Psoas muscle (tissue), 8 donors: ENCODE measurements at regions of chr1 and their contacts with region 1.

Region 1: GRCh38 chr1:181142096-181142958 is 53.8 kb downstream of the IER5 start:
- DNase-seq: peak; percentile 86 to 95
- ATAC-seq: peak; percentile 96 to 98 (median 98)
- H3K4me3 ChIP-seq: peak overlapping the region; percentile 60
- H3K27ac ChIP-seq: peak overlapping the region; percentile 66
- H3K4me1 ChIP-seq: peaks cover 16% of the 10 kb centered on the region
- H3K27me3 ChIP-seq: no peaks in the 10 kb centered on the region
- CTCF ChIP-seq: peak; percentile 99

Region 2: DNA sequence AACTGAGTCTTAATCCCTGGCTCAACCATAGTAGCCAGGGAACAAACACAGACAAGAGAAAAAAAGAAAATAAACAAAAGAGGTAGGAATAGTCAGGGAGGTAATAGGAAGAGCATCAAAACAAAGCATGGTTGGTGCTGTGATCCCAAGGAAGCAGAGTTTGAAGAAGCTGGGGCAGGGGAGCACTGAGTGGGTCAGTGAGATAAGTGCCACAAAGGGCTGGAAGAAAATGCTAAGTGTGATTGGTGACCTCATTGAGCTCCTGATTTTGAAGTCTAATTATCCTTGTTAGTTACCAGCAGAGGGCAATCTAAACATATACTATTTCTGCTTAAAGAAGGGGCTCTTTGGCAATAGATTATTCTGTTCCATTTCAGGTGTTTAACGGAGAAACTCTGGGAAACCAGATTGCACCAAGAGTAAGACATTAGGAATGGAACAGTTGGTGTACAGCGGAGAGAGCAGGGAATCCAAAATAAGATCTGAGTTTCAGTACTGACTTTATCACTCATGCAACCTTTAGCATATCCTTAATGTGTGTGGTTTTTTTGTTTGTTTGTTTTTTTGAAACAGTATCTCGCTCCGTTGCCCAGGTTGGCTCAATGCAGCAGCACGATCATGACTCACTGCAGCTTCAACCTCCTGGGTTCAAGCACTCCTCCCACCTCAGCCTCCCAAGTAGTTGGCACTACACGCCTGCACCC is 260.4 kb before region 1 on chr1:
- intact Hi-C with region 1: loop called in 1 of 2 experiments (anchors 1 kb)
- DNase-seq: no peak
- ATAC-seq: peak; percentile 58 to 80 (median 71)
- H3K4me3 ChIP-seq: no peak overlapping the region
- H3K27ac ChIP-seq: peak overlapping the region; percentile 27
- H3K4me1 ChIP-seq: no peaks in the 10 kb centered on the region
- H3K27me3 ChIP-seq: no peaks in the 10 kb centered on the region
- CTCF ChIP-seq: peak; percentile 59

Region 3: GRCh38 chr1:181021811-181022434 is 120.4 kb before region 1 on chr1:
- intact Hi-C with region 1: loop called in 1 of 2 experiments (anchors 5 kb)
- DNase-seq: peak; percentile 68 to 70
- ATAC-seq: peak; percentile 39 to 69 (median 52)
- H3K4me3 ChIP-seq: peak overlapping the region; percentile 74
- H3K27ac ChIP-seq: peak overlapping the region; percentile 90
- H3K4me1 ChIP-seq: peaks cover 18% of the 10 kb centered on the region
- H3K27me3 ChIP-seq: no peaks in the 10 kb centered on the region
- CTCF ChIP-seq: no peak

Region 4: DNA sequence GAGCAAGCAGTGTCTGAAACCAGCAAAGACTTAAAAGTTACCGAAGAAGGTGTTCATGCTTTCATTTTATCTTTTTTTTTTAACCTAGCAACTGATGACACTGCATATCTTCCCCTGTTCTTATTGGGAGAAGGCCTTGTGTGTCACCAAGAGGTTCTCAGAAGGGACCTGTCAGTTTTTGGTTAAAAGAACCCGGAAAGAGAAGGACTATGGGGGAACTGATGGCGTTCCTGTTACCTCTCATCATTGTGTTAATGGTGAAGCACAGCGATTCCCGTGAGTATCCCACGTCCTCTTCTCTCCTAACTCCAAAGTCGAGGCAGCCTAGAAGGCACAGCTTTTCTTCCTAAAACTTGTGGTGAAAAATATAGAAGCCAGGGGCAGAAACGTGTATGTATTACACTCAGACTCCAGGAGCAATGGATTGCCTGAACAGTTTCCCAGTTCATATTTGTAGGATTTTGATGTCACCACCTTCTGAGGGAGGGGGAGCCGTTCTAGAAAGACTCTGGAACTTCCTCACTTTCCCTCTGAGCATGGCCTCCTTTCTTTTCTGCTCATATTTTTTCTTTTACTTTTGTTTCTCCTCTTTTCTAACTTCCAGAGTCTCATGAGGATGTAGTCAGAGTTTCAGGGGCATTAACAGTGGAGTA is 108.4 kb before region 1 on chr1 and contains the start of gene MR1:
- intact Hi-C with region 1: loop called (anchors 2 to 5 kb)
- DNase-seq: no peak
- ATAC-seq: peak; percentile 82 to 93 (median 85)
- H3K4me3 ChIP-seq: peak within 1 kb of the TSS; percentile 70
- H3K27ac ChIP-seq: peak within 1 kb of the TSS; percentile 93
- H3K4me1 ChIP-seq: peaks cover 19% of the 10 kb centered on the region
- H3K27me3 ChIP-seq: no peaks in the 10 kb centered on the region
- CTCF ChIP-seq: no peak
- total RNA-seq, gene MR1: 2.0 to 3.0 (median 2.6) TPM

Region 5: GRCh38 chr1:181088079-181089016 is 54.0 kb before region 1 on chr1 and contains the start of gene IER5:
- intact Hi-C with region 1: loop called (anchors 1 to 5 kb)
- DNase-seq: peak; percentile 95 to 98
- ATAC-seq: peak; percentile 84 to 87 (median 86)
- H3K4me3 ChIP-seq: peak within 1 kb of the TSS; percentile 91
- H3K27ac ChIP-seq: peak within 1 kb of the TSS; percentile 97
- H3K4me1 ChIP-seq: peaks cover 33% of the 10 kb centered on the region
- H3K27me3 ChIP-seq: no peaks in the 10 kb centered on the region
- CTCF ChIP-seq: no peak
- total RNA-seq, gene IER5: 19.9 to 110 (median 48.6) TPM